ENCODE measurements at regions of chr19 and their contacts with region 1.

Region 1: GRCh38 chr19:42132851-42133528 is 744 bp upstream of the POU2F2 start:
- DNase-seq: peak; percentile 75 to 85 (median 78)
- ATAC-seq: peak; percentile 89
- H3K4me3 ChIP-seq: no peak overlapping the region
- H3K27ac ChIP-seq: no peak overlapping the region
- H3K4me1 ChIP-seq: peaks cover 13% of the 10 kb centered on the region
- H3K27me3 ChIP-seq: no peaks in the 10 kb centered on the region
- CTCF ChIP-seq: peak; percentile 91 to 98 (median 96)
- POLR2A ChIP-seq: peak in 1 of 3 donors; percentile 36

Region 2: DNA sequence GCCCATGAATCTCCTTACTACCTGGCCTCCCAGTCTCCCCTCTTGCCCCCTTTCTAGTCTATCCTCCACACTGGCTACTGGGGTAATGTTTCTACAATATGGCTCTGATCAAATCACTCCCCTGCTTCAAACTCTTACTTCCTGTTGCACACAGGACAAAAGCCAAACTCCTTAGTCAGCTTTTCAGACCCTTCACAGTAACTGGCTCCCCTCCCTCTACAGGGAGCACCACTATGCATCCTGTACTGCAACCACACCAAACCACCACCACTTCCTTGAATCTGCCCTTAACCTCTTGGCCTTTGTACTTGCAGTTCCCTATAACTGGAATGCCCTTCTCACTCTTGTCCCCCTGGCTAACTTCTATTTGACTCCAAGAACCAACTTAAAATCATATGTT is 52.3 kb after region 1 on chr19:
- intact Hi-C with region 1: loop called (anchors 5 kb)
- DNase-seq: peak in 1 of 4 donors; percentile 39
- ATAC-seq: no peak
- H3K4me3 ChIP-seq: no peak overlapping the region
- H3K27ac ChIP-seq: no peak overlapping the region
- H3K4me1 ChIP-seq: no peaks in the 10 kb centered on the region
- H3K27me3 ChIP-seq: peaks cover 0 to 3% of the 10 kb centered on the region in 2 donors
- CTCF ChIP-seq: no peak
- POLR2A ChIP-seq: no peak

Region 3: DNA sequence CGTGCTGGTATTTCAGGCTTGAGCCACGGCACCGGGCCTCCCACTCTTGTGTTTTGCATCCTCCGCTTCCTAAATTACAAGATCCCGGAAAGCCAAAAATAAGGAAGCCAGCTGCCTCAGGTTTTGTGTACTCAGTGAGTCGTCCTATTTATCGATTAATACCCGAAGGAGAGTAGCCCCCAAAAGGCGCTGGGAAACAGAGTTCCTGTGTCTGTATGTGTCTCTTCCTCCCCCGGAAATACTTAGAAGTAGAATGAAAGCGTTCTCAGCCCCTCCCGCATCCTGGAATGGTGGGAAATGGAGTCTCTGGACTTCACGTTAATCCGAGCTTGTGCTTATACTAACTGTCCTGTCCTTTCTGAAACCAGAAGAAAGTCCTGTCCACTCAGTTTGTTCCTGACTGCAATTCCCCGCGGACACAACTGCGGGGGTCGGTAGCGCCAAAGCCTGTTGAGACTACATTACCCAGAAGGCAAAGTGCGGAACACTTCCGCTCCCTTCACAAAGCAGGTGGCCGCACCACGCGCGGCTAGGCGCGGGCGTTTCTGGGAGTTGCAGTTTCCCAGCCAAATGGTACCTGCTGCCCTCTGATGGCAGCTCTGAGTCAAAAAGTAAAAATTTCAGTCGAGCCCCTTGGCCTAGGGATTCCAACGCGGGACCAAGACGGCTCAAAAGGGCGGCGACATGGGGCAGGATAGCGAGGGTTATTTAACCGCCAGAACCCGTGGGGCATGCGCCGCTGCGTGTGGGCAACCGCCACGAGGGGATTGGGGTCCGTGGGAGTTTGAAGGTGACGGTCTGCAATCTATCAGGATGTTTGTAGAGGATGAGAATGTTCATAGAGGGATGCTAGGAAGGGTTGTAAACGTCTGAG is 111.6 kb after region 1 on chr19:
- intact Hi-C with region 1: no loop called
- DNase-seq: peak; percentile 90 to 93 (median 91)
- ATAC-seq: peak; percentile 39
- H3K4me3 ChIP-seq: peak overlapping the region; percentile 2 to 26
- H3K27ac ChIP-seq: peak overlapping the region; percentile 72 to 94 (median 83)
- H3K4me1 ChIP-seq: peaks cover 50% of the 10 kb centered on the region
- H3K27me3 ChIP-seq: no peaks in the 10 kb centered on the region
- CTCF ChIP-seq: peak; percentile 36 to 80 (median 64)
- POLR2A ChIP-seq: peak; percentile 9 to 82 (median 72)

Measured in body of pancreas (tissue), 4 donors.